Dorsolateral prefrontal cortex (tissue), 120 donors: ENCODE measurements at regions of chr1 and their contacts with region 1.

Region 1: DNA sequence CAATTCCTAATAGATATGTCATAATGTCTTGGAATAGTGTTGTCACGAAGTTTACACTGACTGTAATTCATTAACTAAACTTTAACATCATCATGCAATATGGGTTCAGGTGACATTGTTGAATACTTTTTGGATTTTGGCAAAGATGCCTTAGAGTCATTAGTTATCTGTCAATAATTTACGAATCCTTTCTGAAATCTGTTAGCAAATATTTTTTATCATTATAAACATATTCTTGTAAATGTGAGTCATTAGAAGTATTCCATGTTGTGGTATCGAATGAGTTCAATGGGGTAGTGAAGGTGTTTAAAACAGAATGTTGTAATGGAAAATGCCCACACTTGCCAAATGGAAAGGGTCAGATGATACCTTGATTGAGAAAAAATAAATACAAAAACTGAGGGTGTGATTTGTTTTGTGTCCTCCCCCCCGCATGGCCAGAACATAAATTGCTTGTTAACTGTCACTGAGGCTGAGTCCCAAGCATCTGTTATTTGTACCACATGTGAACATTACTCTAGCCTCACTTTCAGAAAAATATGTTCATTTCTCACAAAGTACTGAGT is 5.2 kb upstream of the NR5A2 start:
- DNase-seq: no peak
- H3K4me3 ChIP-seq: no peak overlapping the region
- H3K27ac ChIP-seq: no peak overlapping the region
- H3K27me3 ChIP-seq: peaks cover 0 to 59% (median 21%) of the 10 kb centered on the region in 45 donors
- CTCF ChIP-seq: no peak

Region 2: DNA sequence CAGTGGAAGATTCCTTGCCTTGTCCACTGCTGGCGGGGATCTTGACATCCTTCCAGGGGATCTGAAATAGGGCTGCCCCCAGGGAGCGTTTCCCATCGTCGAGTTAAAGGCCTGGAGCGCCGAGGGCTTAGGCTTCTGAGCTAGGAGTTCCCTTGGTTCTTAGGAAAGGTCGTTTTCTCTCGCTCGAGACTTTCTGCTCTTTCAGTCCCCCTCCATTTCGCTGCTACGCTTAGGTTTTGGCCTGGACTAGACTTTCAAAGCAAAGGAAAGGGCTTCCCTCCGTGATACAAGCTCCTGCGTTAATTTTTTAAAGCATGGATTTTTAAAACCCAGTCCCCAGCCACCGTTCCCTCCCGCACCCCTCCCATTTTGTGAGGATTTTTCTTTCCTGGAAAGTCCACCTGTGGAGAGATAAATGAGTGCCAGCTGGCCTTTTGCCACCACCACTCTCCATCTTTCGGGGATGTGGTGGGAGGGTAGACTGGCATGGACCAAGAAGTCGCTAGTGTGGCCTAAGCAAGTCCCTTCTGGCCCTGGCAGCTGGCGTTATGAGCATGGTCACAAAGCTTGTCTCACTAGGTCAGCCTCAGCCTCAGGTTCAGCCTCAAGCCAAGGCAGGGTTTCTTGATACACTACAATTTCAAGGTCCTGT is 14.4 kb after region 1 on chr1:
- intact Hi-C with region 1: no loop called
- DNase-seq: no peak
- H3K4me3 ChIP-seq: no peak overlapping the region
- H3K27ac ChIP-seq: no peak overlapping the region
- H3K27me3 ChIP-seq: peaks cover 17 to 100% (median 99%) of the 10 kb centered on the region in 45 donors
- CTCF ChIP-seq: no peak

Region 3: GRCh38 chr1:200048218-200048617 is 25.9 kb after region 1 on chr1:
- intact Hi-C with region 1: loop called in 1 of 2 experiments (anchors 2 kb)
- DNase-seq: no peak
- H3K4me3 ChIP-seq: no peak overlapping the region
- H3K27ac ChIP-seq: no peak overlapping the region
- H3K27me3 ChIP-seq: peaks cover under 1 to 62% (median 43%) of the 10 kb centered on the region in 45 donors
- CTCF ChIP-seq: no peak